ENCODE measurements at regions of chr19 and their contacts with region 1.

Region 1: DNA sequence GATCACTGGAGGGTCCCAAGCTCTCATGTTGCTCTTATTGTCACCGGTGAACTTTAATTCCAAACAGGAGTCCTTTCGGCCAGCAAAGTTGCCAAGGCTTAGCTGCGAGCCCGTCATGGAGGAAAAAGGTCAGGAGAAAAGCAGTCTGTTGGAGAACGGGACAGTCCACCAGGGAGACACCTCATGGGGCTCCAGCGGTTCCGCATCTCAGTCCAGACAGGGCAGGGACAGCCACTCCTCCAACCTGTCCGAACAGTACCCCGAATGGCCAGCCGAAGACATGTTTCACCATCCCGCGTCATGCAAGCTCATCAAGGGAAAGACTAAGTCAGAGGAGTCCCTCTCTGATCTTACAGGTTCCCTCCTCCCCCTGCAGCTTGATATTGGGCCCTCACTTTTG is 10.4 kb downstream of the ZNF91 start:
- DNase-seq: no peak
- ATAC-seq: peak; percentile 43

Region 2: GRCh38 chr19:23305555-23305954 is 79.3 kb before region 1 on chr19:
- intact Hi-C with region 1: no loop called
- DNase-seq: no peak
- ATAC-seq: no peak

Region 3: DNA sequence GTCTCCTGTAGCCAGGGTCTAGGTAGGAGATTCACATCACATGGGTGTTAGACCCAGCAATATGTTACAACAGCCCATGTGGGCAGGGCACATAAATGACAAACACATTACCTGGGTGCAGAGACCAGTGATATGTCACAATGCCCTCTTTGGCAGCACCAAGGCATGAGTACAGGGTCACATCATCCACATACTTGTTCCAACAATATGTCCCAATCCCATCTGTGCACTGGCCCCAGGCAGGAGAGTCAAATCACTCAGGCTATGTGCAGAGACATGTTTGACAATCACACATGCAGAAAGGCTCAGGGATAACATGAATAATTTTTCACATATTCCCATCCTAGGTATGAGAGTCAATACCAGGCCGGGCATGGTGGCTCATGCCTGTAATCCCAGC is 139.6 kb after region 1 on chr19:
- intact Hi-C with region 1: loop called (anchors 5 kb)
- DNase-seq: no peak
- ATAC-seq: peak; percentile 27